PC-9 (cell line): ENCODE measurements at regions of chr15 and their contacts with region 1.

Region 1: GRCh38 chr15:49179433-49180190 is 9.6 kb downstream of the GALK2 start:
- DNase-seq: no peak
- H3K4me3 ChIP-seq: no peak overlapping the region
- H3K27ac ChIP-seq: no peak overlapping the region
- H3K4me1 ChIP-seq: no peaks in the 10 kb centered on the region
- H3K27me3 ChIP-seq: no peaks in the 10 kb centered on the region
- CTCF ChIP-seq: no peak

Region 2: GRCh38 chr15:50302581-50302980 is 1123.0 kb after region 1 on chr15:
- CTCF ChIA-PET with region 1: interaction called, 10 read pairs
- POLR2A ChIA-PET with region 1: no interaction called
- intact Hi-C with region 1: no loop called
- DNase-seq: no peak
- H3K4me3 ChIP-seq: no peak overlapping the region
- H3K27ac ChIP-seq: no peak overlapping the region
- H3K4me1 ChIP-seq: no peaks in the 10 kb centered on the region
- H3K27me3 ChIP-seq: no peaks in the 10 kb centered on the region
- CTCF ChIP-seq: no peak